ENCODE measurements at regions of chr7 and their contacts with region 1.

Region 1: DNA sequence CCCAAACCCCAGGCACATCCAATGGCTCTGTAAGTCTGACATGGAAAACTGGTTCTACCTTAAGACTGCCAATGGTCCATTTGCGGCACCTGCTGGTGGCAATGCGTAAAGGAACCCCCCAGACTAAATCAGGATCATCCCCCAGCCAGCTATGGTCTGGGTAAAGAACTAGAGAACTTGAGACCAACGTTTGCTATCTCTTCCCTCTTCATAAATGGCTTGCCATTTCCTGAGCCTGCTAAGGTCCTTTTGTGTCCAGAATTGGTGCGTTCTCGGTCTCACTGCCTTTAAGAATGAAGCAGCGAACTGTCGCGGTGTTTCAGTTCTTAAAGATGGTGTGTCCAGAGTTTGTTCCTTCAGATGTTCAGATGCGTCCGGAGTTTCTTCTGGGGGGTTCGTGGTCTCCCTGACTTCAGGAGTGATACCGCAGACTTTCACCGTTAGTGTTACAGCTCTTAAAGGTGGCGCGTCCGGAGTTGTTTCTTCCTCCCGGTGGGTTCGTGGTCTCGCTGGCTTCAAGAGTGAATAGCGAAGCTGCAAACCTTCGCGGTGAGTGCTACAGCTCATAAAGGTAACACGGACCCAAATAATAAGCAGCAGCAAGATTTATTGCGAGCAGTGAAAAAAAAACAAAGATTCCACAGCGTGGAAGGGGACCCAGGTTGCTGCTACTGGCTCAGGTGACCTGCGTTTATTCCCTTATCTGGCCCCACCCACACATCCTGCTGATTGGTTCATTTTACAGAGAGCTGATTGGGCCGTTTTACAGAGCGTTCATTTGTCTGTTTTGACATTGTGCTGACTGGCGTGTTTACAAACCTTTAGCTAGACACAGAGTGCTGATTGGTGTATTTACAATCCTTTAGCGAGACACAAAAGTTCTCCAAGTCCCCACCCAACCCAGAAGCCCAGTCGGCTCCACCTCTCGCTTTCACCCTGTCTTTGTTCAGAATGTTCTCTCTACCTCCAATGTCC is 95.4 kb downstream of the ELMO1 start:
- DNase-seq: peak; percentile 79 to 91 (median 83)
- H3K4me3 ChIP-seq: peak overlapping the region; percentile 78 to 91
- H3K4me3 Mint-ChIP-seq: peak overlapping the region; percentile 93 to 97 (median 96)
- H3K27ac ChIP-seq: peak overlapping the region; percentile 73
- H3K27ac Mint-ChIP-seq: peak overlapping the region; percentile 82 to 98 (median 94)
- H3K4me1 ChIP-seq: peaks cover 71% of the 10 kb centered on the region
- H3K4me1 Mint-ChIP-seq: peaks cover 69 to 96% (median 84%) of the 10 kb centered on the region in 4 donors
- H3K27me3 ChIP-seq: no peaks in the 10 kb centered on the region
- H3K27me3 Mint-ChIP-seq: no peaks in the 10 kb centered on the region

Region 2: DNA sequence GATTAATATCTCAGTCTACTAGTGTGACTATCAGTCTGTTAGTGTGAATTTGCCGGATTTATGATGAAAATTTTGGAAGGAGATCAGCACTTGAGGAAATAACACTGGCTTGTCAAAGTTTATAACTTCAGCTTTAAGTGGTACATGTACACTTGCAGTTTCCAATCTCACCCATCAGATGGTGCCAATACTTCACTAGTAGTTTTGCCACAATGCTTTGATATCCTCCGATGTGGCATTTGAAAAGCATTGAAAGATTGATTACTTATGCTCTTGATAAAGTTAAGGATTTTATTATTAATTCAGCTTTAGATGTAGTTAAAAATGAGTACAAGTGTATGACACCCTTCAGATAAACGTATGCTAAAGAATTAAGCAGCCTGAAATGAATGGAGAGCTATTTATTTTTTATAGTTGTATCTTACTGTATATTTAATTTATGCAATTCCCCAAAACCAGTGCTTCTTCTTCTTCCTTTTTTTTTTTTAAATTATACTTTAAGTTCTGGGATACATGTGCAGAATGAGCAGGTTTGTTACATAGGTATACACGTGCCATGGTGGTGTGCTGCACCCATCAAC is 865.4 kb before region 1 on chr7:
- CTCF ChIA-PET with region 1: interaction called, 5 read pairs
- POLR2A ChIA-PET with region 1: no interaction called
- intact Hi-C with region 1: loop called (anchors 5 kb)
- DNase-seq: peak; percentile 43 to 61 (median 59)
- H3K4me3 ChIP-seq: no peak overlapping the region
- H3K4me3 Mint-ChIP-seq: no peak overlapping the region
- H3K27ac ChIP-seq: no peak overlapping the region
- H3K27ac Mint-ChIP-seq: no peak overlapping the region
- H3K4me1 ChIP-seq: no peaks in the 10 kb centered on the region
- H3K4me1 Mint-ChIP-seq: peaks cover 0 to 2% (median 0%) of the 10 kb centered on the region in 4 donors
- H3K27me3 ChIP-seq: no peaks in the 10 kb centered on the region
- H3K27me3 Mint-ChIP-seq: peaks cover 0 to 1% of the 10 kb centered on the region in 2 donors

Region 3: GRCh38 chr7:36600869-36601530 is 752.3 kb before region 1 on chr7:
- CTCF ChIA-PET with region 1: no interaction called
- POLR2A ChIA-PET with region 1: no interaction called
- intact Hi-C with region 1: no loop called
- DNase-seq: no peak
- H3K4me3 ChIP-seq: no peak overlapping the region
- H3K4me3 Mint-ChIP-seq: no peak overlapping the region
- H3K27ac ChIP-seq: no peak overlapping the region
- H3K27ac Mint-ChIP-seq: peak overlapping the region in 1 of 7 donors; percentile 14
- H3K4me1 ChIP-seq: no peaks in the 10 kb centered on the region
- H3K4me1 Mint-ChIP-seq: peaks cover 2 to 29% (median 4%) of the 10 kb centered on the region in 4 donors
- H3K27me3 ChIP-seq: no peaks in the 10 kb centered on the region
- H3K27me3 Mint-ChIP-seq: no peaks in the 10 kb centered on the region

Region 4: DNA sequence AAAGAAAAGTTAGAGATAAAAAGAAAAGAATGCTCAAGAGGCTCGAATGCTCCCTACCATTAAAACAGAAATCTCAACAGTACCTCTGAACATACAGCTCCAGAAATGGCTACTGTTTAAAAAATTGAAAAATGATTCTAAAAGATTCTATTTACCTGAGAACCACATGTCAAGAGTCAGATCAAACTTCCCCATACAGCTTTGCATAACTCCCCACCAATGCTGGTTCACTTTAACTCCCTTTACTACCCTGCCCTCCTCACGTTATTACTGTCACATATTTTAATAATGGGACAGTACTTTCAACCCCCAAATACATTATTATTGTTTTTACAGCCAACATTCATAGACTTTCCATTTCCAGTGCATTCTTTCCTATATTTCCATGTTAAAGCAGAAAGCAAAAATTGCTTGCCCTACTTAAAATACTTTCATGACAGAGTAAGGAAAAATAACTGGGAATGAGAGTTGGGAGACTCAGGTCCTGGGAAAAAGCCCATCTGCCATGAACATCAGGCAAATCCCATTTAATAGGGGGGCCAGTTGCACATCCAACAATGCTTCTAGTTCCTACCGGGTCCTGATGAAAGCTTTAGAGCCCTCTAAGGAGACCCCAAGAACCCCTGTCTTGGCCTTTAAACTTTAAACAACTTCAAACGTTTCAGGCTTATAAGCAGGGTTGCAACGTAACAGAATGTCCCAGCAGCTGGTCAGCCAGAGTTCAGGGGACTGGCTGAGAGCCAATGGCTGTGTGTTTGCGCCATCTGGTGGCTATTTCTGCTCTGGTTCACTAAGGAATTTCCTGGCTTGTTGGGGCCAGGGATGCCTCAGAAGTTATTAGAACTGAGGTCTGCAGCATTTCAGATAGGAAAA is 152.0 kb before region 1 on chr7:
- CTCF ChIA-PET with region 1: interaction called, 27 read pairs
- POLR2A ChIA-PET with region 1: no interaction called
- intact Hi-C with region 1: loop called (anchors 2 kb)
- DNase-seq: peak in 4 of 5 donors; percentile 10 to 28 (median 25)
- H3K4me3 ChIP-seq: no peak overlapping the region
- H3K4me3 Mint-ChIP-seq: no peak overlapping the region
- H3K27ac ChIP-seq: no peak overlapping the region
- H3K27ac Mint-ChIP-seq: peak overlapping the region in 3 of 7 donors; percentile 5 to 59 (median 22)
- H3K4me1 ChIP-seq: no peaks in the 10 kb centered on the region
- H3K4me1 Mint-ChIP-seq: peaks cover 4 to 12% (median 7%) of the 10 kb centered on the region in 4 donors
- H3K27me3 ChIP-seq: no peaks in the 10 kb centered on the region
- H3K27me3 Mint-ChIP-seq: no peaks in the 10 kb centered on the region

Region 5: DNA sequence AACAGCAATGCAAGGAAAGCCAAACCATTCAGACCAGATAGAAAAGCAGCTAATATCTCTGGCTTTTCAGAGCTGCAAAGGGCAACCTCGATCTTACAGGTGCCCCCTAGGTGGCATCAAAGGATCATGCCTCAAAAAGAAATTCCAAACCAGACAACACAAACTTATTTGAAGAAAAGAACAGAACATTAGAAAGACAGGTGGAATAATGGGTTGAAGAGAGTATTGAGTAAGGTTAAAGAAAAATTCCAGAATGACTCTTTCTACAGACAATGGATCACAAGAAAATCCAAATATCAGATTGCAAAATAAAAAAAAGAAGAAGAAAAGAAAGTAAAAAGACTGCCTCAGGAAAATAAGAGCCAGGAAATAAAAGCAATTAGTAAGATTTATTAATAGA is 118.3 kb before region 1 on chr7:
- CTCF ChIA-PET with region 1: interaction called, 68 read pairs
- POLR2A ChIA-PET with region 1: no interaction called
- intact Hi-C with region 1: loop called (anchors 1 kb)
- DNase-seq: peak; percentile 11 to 39 (median 24)
- H3K4me3 ChIP-seq: no peak overlapping the region
- H3K4me3 Mint-ChIP-seq: no peak overlapping the region
- H3K27ac ChIP-seq: no peak overlapping the region
- H3K27ac Mint-ChIP-seq: peak overlapping the region in 3 of 7 donors; percentile 37 to 77 (median 51)
- H3K4me1 ChIP-seq: peaks cover 16% of the 10 kb centered on the region
- H3K4me1 Mint-ChIP-seq: peaks cover 23 to 33% (median 28%) of the 10 kb centered on the region in 4 donors
- H3K27me3 ChIP-seq: no peaks in the 10 kb centered on the region
- H3K27me3 Mint-ChIP-seq: no peaks in the 10 kb centered on the region

Region 6: GRCh38 chr7:37342688-37343471 is 10.4 kb before region 1 on chr7:
- CTCF ChIA-PET with region 1: interaction called, 17 read pairs
- POLR2A ChIA-PET with region 1: interaction called, 40 read pairs
- intact Hi-C with region 1: loop called (anchors 1 kb)
- DNase-seq: peak; percentile 75 to 89 (median 79)
- H3K4me3 ChIP-seq: peak overlapping the region; percentile 39 to 70
- H3K4me3 Mint-ChIP-seq: peak overlapping the region; percentile 92 to 99 (median 96)
- H3K27ac ChIP-seq: peak overlapping the region; percentile 75
- H3K27ac Mint-ChIP-seq: peak overlapping the region; percentile 92 to 98 (median 98)
- H3K4me1 ChIP-seq: peaks cover 90% of the 10 kb centered on the region
- H3K4me1 Mint-ChIP-seq: peaks cover 54 to 89% (median 74%) of the 10 kb centered on the region in 4 donors
- H3K27me3 ChIP-seq: no peaks in the 10 kb centered on the region
- H3K27me3 Mint-ChIP-seq: no peaks in the 10 kb centered on the region

Region 7: GRCh38 chr7:37462138-37462537 is 108.9 kb after region 1 on chr7:
- CTCF ChIA-PET with region 1: no interaction called
- POLR2A ChIA-PET with region 1: no interaction called
- intact Hi-C with region 1: no loop called
- DNase-seq: no peak
- H3K4me3 ChIP-seq: no peak overlapping the region
- H3K4me3 Mint-ChIP-seq: no peak overlapping the region
- H3K27ac ChIP-seq: no peak overlapping the region
- H3K27ac Mint-ChIP-seq: no peak overlapping the region
- H3K4me1 ChIP-seq: no peaks in the 10 kb centered on the region
- H3K4me1 Mint-ChIP-seq: no peaks in the 10 kb centered on the region
- H3K27me3 ChIP-seq: no peaks in the 10 kb centered on the region
- H3K27me3 Mint-ChIP-seq: peaks cover 5 to 13% of the 10 kb centered on the region in 2 donors

Region 8: GRCh38 chr7:37495574-37496184 is 142.4 kb after region 1 on chr7:
- CTCF ChIA-PET with region 1: interaction called, 36 read pairs
- POLR2A ChIA-PET with region 1: no interaction called
- intact Hi-C with region 1: loop called (anchors 1 kb)
- DNase-seq: peak in 4 of 5 donors; percentile 25 to 43 (median 38)
- H3K4me3 ChIP-seq: no peak overlapping the region
- H3K4me3 Mint-ChIP-seq: no peak overlapping the region
- H3K27ac ChIP-seq: no peak overlapping the region
- H3K27ac Mint-ChIP-seq: no peak overlapping the region
- H3K4me1 ChIP-seq: no peaks in the 10 kb centered on the region
- H3K4me1 Mint-ChIP-seq: no peaks in the 10 kb centered on the region
- H3K27me3 ChIP-seq: no peaks in the 10 kb centered on the region
- H3K27me3 Mint-ChIP-seq: no peaks in the 10 kb centered on the region

Measured in CD4-positive, alpha-beta memory T cell (primary cell).